Activated CD4-positive, alpha-beta T cell treated with anti-CD3 and anti-CD28 coated beads, Interleukin-2, amount 10 ng/mL, durations not matched to agents 24 days and 14 days (primary cell): ENCODE measurements at regions of chr15 and their contacts with region 1.

Region 1: DNA sequence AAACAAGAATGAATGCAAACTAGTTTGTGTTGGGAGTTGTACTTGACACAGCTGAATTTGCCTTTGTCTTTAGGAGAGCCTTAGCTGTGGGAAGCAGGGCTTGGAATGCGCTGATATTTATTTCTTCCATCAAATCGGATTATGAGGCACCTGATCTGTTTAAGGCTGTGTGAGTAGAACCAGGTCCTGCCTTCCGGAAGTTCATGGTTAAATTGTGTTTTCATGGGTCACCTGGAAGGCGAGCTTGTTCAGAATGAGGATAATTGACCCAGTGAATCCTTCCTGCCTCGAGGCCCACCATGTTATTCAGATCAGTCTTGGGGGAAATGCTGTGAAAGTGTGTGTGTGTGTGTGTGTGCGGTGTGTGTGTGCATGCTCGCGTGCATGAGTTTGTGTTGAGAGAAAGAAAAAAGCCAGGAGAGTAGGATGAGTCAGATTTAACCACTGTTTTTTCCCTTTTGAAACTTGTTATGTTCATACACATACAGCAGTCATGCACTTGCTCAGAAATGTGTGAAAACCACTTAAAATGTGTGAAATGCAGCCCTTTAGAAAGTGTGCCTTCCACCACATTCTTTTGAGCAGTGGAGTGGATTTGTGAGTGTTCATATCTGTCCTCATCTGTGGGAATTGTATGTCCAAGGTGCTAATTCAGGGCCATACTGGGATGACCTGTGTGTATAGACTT is 36.7 kb downstream of the SMAD3 start:
- DNase-seq: peak; percentile 89
- H3K4me3 Mint-ChIP-seq: no peak overlapping the region
- H3K27ac Mint-ChIP-seq: no peak overlapping the region
- H3K4me1 Mint-ChIP-seq: peaks cover 62% of the 10 kb centered on the region
- H3K27me3 Mint-ChIP-seq: no peaks in the 10 kb centered on the region

Region 2: DNA sequence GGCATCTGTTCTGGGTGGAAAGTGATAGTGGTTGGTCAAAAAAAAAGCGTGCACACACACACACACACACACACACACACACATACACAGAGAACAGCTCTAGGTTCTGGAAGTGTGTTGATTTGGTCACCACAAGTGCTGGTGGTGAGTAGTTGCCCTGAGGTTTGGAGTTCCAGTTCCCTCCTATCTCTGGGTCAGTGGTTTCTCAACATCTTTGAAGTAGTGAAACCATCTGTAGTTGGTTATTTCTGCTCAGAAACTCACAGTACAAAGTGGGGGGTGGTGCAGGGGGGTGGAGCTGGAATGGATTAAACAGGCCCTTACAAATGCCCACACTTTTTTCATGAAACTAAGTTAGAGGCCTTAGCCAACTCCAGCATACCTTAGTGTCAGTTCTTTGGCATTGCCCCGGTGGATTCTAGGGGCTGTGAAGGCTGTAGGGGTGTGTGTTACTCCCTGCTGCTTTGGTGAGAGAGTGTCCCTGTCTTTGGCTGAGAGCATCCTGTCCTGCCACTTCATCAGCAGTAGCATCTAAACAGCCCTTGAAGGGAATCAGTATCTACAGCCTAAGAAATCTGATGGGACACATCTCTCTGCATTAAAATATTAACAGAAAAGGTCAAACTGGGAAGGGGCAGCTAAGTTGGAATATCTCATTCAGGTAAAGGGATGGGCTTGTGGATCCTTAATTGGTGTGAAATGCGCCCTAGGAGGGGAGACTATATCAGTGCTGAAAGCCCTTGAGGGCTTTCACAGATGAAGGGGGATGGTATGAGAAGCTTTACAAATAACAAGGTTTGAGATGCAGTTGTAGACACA is 16.0 kb before region 1 on chr15:
- intact Hi-C with region 1: loop called (anchors 1 kb)
- DNase-seq: peak; percentile 84
- H3K4me3 Mint-ChIP-seq: peak overlapping the region; percentile 74
- H3K27ac Mint-ChIP-seq: peak overlapping the region; percentile 96
- H3K4me1 Mint-ChIP-seq: peaks cover 95% of the 10 kb centered on the region
- H3K27me3 Mint-ChIP-seq: no peaks in the 10 kb centered on the region

Region 3: GRCh38 chr15:67114846-67115600 is 13.0 kb after region 1 on chr15:
- intact Hi-C with region 1: loop called (anchors 1 kb)
- DNase-seq: peak; percentile 78
- H3K4me3 Mint-ChIP-seq: peak overlapping the region; percentile 62
- H3K27ac Mint-ChIP-seq: peak overlapping the region; percentile 99
- H3K4me1 Mint-ChIP-seq: peaks cover 86% of the 10 kb centered on the region
- H3K27me3 Mint-ChIP-seq: no peaks in the 10 kb centered on the region

Region 4: DNA sequence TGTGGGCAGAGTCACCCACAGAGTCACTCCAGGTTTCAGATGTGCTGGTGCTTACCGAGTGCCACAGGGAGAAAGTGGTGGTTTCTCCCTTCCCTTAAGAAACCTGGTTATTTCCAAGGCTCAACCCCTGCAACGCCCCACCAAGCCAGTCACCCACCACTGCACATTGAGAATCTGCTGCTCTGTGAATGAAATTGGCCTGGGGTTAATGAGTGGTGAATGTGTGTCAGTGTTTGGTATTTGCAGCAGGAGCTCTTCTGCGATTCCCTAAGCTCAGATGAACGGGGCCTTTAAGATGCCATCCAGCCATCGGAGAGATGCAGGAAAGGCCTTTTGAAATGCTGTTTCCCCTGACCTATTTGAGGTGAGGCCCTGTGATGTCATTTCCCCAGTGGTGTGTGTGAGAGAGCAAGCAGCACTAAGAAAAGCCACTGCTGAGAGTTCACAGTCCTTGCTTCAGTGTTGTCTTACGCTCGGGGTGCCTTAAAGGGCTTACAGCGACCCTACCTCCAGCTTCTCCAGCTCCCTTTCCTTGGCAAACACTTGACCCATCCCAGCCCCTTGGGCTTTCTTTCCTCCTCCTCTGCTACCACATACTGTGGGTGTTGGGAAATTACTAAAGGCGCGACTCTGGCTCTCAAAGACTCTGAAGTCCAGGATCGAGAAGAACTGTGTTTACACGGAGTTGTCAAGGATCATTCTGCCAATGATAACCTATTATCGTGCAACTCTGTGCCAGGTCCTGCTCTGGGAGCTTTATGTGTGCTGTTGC is 32.2 kb after region 1 on chr15:
- intact Hi-C with region 1: loop called (anchors 1 kb)
- DNase-seq: peak; percentile 92
- H3K4me3 Mint-ChIP-seq: peak overlapping the region; percentile 80
- H3K27ac Mint-ChIP-seq: peak overlapping the region; percentile 92
- H3K4me1 Mint-ChIP-seq: peaks cover 81% of the 10 kb centered on the region
- H3K27me3 Mint-ChIP-seq: no peaks in the 10 kb centered on the region

Region 5: GRCh38 chr15:67175643-67176071 is 73.6 kb after region 1 on chr15:
- intact Hi-C with region 1: loop called (anchors 2 kb)
- DNase-seq: peak; percentile 71
- H3K4me3 Mint-ChIP-seq: peak overlapping the region; percentile 24
- H3K27ac Mint-ChIP-seq: peak overlapping the region; percentile 82
- H3K4me1 Mint-ChIP-seq: peaks cover 63% of the 10 kb centered on the region
- H3K27me3 Mint-ChIP-seq: no peaks in the 10 kb centered on the region

Region 6: DNA sequence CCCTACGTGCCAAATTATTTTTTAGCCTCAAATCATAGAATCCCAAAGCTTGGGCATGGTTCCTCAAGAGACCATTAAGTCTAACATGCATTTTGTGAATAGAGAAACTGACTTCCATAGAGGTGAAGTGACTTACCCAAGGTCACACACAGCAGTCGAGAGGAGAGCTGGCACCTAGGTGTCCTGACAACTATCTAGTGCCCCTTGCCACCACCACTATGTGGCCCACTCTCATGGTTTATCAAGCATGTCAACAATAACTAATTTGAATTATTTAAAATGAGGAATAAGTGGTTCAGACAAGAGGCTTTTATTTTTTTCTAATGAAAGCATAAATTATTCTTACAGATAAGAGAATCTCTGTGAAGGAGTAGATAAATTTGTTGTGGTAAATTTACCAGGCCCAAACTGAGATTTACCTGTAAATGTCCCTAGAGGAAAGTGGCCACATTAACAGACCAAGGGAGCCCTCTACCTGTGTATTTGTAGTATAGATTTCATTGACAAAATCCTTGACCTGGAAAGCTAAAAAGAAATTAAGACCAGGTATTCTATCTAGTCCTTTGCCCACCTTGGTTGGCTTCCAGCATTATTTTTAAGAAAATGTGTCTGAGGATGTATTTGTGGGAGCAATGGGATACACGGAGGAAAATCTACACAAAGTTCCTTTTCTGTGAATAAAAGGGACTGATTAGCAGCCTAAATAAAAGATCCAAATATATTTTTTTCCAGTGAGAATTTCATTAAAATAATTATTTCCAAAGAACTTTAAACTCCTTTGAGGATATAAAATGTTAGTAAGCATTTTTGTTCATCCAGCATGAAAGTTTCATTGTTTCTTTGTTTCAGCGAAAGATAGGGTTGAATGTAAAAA is 201.7 kb after region 1 on chr15:
- intact Hi-C with region 1: loop called (anchors 1 kb)
- DNase-seq: peak; percentile 73
- H3K4me3 Mint-ChIP-seq: no peak overlapping the region
- H3K27ac Mint-ChIP-seq: no peak overlapping the region
- H3K4me1 Mint-ChIP-seq: peaks cover 4% of the 10 kb centered on the region
- H3K27me3 Mint-ChIP-seq: peaks cover 12% of the 10 kb centered on the region